PC-9 (cell line): ENCODE measurements at regions of chr7 and their contacts with region 1.

Region 1: DNA sequence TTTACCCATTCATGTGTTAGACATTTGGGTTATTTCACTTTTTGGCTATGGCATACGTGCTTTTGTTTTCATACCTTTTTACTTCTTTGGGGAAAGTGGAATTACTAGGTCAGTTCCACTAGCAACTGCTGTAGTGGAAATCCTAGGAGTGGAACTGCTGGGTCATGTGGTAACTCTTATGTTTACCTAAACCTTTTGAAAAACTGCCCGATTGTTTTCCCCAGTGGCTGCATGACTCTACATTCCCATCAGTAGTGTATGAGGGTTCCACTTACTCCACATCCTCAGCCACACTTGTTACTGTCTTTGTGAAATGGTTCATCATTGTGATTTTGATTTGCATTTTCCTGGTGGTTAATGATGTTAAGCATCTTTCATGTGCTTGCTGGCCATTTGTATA is 82.3 kb downstream of the TAX1BP1 start:
- DNase-seq: no peak
- H3K4me3 ChIP-seq: no peak overlapping the region
- H3K27ac ChIP-seq: no peak overlapping the region
- H3K4me1 ChIP-seq: no peaks in the 10 kb centered on the region
- H3K27me3 ChIP-seq: no peaks in the 10 kb centered on the region
- CTCF ChIP-seq: no peak

Region 2: DNA sequence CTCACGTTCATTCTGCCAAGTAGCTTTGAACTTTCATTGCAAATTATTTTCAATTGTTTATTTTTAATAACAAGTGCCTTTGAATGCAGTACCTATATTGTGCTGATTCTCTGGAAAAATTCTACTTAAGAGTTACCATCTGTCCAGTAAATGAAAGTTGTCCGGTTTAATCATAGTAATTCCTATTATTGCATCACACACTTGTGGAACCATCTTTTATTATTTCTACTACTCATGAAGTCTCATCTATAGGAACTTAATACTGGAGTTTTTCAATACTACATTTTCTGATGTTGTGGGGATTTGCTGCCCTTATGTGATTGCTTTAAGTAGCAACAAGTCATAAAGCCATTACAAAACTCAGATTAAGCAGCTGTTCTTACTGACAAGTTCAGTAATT is 941.4 kb before region 1 on chr7:
- CTCF ChIA-PET with region 1: no interaction called
- POLR2A ChIA-PET with region 1: no interaction called
- intact Hi-C with region 1: no loop called
- DNase-seq: no peak
- H3K4me3 ChIP-seq: no peak overlapping the region
- H3K27ac ChIP-seq: no peak overlapping the region
- H3K4me1 ChIP-seq: peaks cover 15% of the 10 kb centered on the region
- H3K27me3 ChIP-seq: no peaks in the 10 kb centered on the region
- CTCF ChIP-seq: no peak

Region 3: DNA sequence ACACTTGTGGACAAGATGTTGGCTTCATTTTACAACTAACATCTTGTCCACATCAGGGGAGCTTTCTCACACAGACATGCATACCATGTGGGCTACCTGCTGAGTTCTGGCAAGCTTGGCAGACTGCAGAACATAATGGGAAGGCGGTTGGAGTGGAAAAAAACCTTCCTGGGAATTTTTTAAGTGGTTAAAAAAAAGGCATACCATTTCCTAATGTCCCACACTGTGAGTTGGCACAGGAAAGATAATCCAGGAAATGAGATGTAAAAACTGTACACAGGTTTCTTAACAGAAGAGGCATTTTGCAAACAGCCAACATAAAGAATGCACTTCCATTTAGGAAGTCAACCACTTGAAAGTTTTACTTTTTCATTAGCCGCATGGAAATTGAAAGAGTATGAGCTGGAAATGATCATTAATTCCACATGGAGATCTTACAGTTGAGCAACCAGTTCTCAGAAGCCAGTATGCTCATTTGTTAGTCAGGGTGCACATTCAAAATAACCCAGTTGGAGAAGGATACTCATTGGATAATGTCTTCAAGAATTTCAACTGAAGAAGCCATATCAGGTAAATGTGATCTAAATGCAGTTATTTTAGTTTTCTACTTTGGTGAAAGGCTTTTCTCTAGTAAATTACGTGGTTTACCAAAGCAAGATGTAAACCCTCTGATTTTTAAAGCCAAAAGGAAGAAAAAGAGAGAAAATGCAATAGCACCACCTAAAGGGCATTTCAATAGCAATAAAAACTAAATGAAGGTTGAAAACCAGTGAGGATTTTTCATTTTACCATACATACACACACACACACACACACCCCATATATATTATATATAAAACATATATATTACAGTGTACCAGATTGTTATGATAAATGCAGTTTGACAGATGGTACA is 111.7 kb after region 1 on chr7:
- CTCF ChIA-PET with region 1: no interaction called
- POLR2A ChIA-PET with region 1: no interaction called
- intact Hi-C with region 1: no loop called
- DNase-seq: no peak
- H3K4me3 ChIP-seq: no peak overlapping the region
- H3K27ac ChIP-seq: no peak overlapping the region
- H3K4me1 ChIP-seq: no peaks in the 10 kb centered on the region
- H3K27me3 ChIP-seq: no peaks in the 10 kb centered on the region
- CTCF ChIP-seq: peak; percentile 57

Region 4: GRCh38 chr7:28155019-28155660 is 332.9 kb after region 1 on chr7:
- CTCF ChIA-PET with region 1: no interaction called
- POLR2A ChIA-PET with region 1: interaction called, 10 read pairs
- intact Hi-C with region 1: no loop called
- DNase-seq: no peak
- H3K4me3 ChIP-seq: no peak overlapping the region
- H3K27ac ChIP-seq: no peak overlapping the region
- H3K4me1 ChIP-seq: peaks cover 24% of the 10 kb centered on the region
- H3K27me3 ChIP-seq: no peaks in the 10 kb centered on the region
- CTCF ChIP-seq: no peak

Region 5: DNA sequence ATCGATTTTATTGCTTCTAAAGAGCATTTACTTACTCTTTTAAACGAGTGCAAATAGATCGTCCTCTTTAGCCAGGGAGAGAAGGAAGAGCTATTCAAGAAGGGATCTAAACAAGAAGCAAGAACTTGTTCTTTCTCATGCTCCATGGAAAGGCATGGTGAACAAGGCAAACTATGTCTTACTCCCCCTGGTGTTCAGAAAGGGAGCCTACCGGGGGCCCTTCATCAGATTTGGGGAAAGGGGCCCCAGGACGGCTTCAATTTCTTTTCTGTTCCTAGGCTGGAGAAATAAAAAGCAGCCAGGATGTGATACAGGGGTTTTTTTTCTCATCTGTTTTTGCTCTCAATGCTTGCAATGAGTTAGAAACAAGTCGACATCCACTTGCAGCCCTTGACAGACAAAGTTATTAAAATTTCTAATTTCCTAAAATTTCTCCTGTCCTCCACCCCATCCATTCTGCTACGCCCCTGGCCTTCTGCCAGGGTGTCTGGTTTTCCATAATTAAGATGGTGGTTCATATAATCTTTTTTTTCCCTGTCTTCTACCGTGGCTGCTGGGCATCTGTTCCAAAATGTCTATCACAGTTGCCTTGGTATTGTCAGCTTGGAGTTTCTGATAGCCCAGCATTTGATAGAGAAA is 804.5 kb after region 1 on chr7:
- CTCF ChIA-PET with region 1: no interaction called
- POLR2A ChIA-PET with region 1: no interaction called
- intact Hi-C with region 1: no loop called
- DNase-seq: peak in 1 of 2 experiments; percentile 27
- H3K4me3 ChIP-seq: no peak overlapping the region
- H3K27ac ChIP-seq: no peak overlapping the region
- H3K4me1 ChIP-seq: peaks cover 21% of the 10 kb centered on the region
- H3K27me3 ChIP-seq: no peaks in the 10 kb centered on the region
- CTCF ChIP-seq: peak; percentile 92